ENCODE measurements at regions of chr7 and their contacts with region 1.

Region 1: GRCh38 chr7:95608359-95609173 is 12.2 kb upstream of the PDK4 start:
- DNase-seq: peak; percentile 88 to 97
- H3K4me3 ChIP-seq: peak overlapping the region; percentile 32; the same call in 1 of the 2 replicates
- H3K27ac ChIP-seq: peak overlapping the region; percentile 91
- H3K4me1 ChIP-seq: peaks cover 36% of the 10 kb centered on the region
- H3K27me3 ChIP-seq: no peaks in the 10 kb centered on the region
- CTCF ChIP-seq: no peak

Region 2: DNA sequence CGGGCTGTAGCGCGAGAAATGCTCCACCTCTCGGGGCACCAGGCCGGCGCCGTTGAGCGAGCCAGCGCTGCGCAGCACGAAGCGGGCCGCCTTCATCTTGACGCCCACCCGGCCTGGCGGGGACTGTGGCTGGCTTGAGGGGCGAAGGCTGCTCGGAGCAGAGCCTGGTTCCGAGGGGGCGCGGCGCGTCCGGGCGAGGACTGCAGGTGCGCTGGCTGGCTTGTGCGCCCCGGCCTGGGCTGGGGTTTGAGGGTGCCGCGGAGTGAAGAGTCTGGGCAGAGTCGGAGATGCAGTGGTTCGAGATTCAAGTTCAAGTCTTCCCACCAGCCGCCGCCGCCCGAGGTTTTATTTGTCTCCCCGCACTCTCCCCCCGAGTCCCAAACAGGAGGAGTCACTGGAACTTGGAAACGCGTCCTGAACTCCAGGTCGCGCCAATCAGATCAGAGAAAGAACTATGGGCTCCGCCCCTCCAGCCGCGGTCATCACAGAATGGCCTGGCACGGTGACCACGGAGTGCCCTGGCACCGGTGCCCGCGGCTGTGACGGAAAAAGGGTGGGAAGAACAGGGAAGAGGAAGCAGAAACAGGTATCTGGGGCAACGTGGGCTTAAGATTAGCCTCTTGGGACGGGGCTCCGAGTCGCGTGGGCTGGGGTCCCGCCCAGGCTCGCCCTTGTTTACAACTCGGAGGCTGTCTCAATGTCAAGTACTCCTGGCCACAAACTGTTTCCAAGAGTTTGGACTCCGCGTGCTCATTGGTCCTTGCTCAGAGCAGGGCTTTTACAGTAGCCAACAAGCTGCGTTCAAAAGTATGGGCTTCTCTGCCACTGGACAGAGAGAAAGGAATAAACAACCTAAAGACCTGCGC is 12.1 kb before region 1 on chr7 and contains the start of gene PDK4:
- CTCF ChIA-PET with region 1: no interaction called
- POLR2A ChIA-PET with region 1: no interaction called
- intact Hi-C with region 1: loop called (anchors 1 kb)
- DNase-seq: peak; percentile 71 to 84
- H3K4me3 ChIP-seq: peak within 1 kb of the TSS; percentile 66
- H3K27ac ChIP-seq: peak within 1 kb of the TSS; percentile 40
- H3K4me1 ChIP-seq: peaks cover 13% of the 10 kb centered on the region
- H3K27me3 ChIP-seq: no peaks in the 10 kb centered on the region
- CTCF ChIP-seq: no peak
- total RNA-seq, gene PDK4: 2.4 and 4.8 TPM in 2 replicates

Region 3: GRCh38 chr7:95642173-95642572 is 33.6 kb after region 1 on chr7:
- CTCF ChIA-PET with region 1: interaction called, 15 read pairs
- POLR2A ChIA-PET with region 1: no interaction called
- intact Hi-C with region 1: no loop called
- DNase-seq: no peak
- H3K4me3 ChIP-seq: no peak overlapping the region
- H3K27ac ChIP-seq: no peak overlapping the region
- H3K4me1 ChIP-seq: no peaks in the 10 kb centered on the region
- H3K27me3 ChIP-seq: no peaks in the 10 kb centered on the region
- CTCF ChIP-seq: no peak

Region 4: GRCh38 chr7:95684037-95684436 is 75.5 kb after region 1 on chr7:
- CTCF ChIA-PET with region 1: interaction called, 4 read pairs
- POLR2A ChIA-PET with region 1: no interaction called
- intact Hi-C with region 1: loop called (anchors 5 kb)
- DNase-seq: peak in 1 of 2 experiments; percentile 36
- H3K4me3 ChIP-seq: no peak overlapping the region
- H3K27ac ChIP-seq: no peak overlapping the region
- H3K4me1 ChIP-seq: no peaks in the 10 kb centered on the region
- H3K27me3 ChIP-seq: no peaks in the 10 kb centered on the region
- CTCF ChIP-seq: peak; percentile 74

Measured in PC-9 (cell line).